HepG2 (cell line): ENCODE measurements at regions of chr15 and their contacts with region 1.

Region 1: DNA sequence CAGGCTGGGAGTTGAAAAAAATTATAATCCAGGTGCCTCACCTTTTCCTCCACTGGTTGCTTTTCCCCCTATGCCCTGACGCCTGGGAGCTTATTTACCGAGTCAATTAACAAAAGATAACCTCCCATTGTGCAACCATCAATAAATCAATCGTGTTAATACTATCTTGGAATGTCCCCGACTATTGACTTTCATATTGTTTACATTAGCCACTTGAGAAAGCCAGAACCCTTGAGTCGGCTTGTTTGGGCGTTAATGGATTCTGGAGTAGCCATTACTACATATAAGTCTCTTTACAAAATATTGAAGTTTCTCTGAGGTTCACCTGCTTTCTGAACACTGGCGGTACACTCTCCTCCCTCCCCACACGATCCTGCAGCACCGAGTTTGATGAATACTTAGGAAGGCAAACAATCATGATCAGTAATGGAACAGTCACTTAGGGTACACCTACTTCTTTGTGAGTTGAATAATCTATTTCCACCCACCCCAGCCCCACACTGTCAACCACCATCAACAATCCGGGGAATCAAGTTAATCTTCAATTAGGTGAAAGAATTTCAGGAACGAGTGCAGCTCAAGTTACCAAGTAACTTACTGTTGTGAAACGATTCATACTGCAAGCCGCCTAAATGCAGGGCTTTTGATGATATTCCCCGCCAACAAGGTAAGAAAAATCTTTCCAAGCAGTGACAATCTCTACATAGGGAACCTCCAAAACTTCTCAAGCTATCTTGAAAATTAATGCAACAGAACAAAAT is 159.3 kb upstream of the NR2F2 start:
- DNase-seq: peak; percentile 88
- ATAC-seq: peak; percentile 95
- H3K4me3 ChIP-seq: peak overlapping the region; percentile 27 to 54 (median 52); a peak in 5 of 6 replicates
- H3K27ac ChIP-seq: peak overlapping the region; percentile 86
- H3K4me1 ChIP-seq: peaks cover 43% of the 10 kb centered on the region
- H3K27me3 ChIP-seq: no peaks in the 10 kb centered on the region
- CTCF ChIP-seq: no peak
- EP300 ChIP-seq: peak in 1 of 2 experiments; percentile 77; a peak in 2 of 4 replicates
- POLR2A ChIP-seq: no peak
- RAD21 ChIP-seq: no peak

Region 2: GRCh38 chr15:96122077-96122681 is 49.0 kb before region 1 on chr15:
- CTCF ChIA-PET with region 1: no interaction called
- POLR2A ChIA-PET with region 1: no interaction called
- in situ Hi-C with region 1: no loop called
- intact Hi-C with region 1: loop called (anchors 5 kb)
- DNase-seq: peak; percentile 7
- ATAC-seq: no peak
- H3K4me3 ChIP-seq: peak overlapping the region in 1 of 3 experiments; percentile 7; a peak in 1 of 6 replicates
- H3K27ac ChIP-seq: peak overlapping the region; percentile 57
- H3K4me1 ChIP-seq: peaks cover 39% of the 10 kb centered on the region
- H3K27me3 ChIP-seq: no peaks in the 10 kb centered on the region
- CTCF ChIP-seq: no peak
- EP300 ChIP-seq: no peak
- POLR2A ChIP-seq: no peak
- RAD21 ChIP-seq: no peak

Region 3: DNA sequence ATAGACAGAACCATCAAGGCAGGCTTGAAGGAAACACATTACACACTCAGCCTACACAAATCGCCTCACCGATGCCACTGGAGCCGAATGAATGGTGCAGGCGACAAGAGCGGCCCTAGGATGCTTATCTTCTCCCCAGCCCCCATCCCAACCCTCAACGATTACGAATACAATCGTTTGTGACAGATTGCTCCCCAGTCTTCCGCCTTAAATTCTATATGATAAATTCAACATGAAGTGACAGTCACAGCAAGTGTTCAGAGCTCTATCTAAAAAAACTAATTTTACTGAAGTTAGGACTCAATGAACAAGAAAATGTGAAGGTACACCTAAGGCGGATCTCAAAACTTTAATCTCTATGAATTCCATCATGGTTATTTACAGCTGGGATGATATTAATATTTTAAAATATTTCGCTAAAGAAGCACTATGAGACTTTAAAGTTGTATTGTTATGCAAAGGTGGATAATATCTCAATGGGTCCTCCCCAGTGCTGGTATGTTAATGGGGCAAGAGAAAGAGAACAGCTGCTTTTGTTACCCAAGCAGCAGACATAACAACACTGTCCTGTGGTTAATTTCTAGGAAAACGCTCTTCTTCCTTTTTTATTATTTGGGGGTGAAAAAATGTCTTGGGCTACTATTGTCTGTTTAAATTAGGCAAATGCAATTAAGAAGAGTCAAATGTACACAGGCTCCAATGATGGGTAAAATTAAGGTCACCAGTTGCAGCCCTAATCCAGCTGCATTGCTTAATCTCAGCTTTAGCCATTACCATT is 11.8 kb after region 1 on chr15:
- CTCF ChIA-PET with region 1: no interaction called
- POLR2A ChIA-PET with region 1: interaction called, 21 read pairs
- in situ Hi-C with region 1: no loop called
- intact Hi-C with region 1: no loop called
- DNase-seq: no peak
- ATAC-seq: no peak
- H3K4me3 ChIP-seq: peak overlapping the region in 1 of 3 experiments; percentile 4; a peak in 1 of 6 replicates
- H3K27ac ChIP-seq: peak overlapping the region; percentile 82
- H3K4me1 ChIP-seq: peaks cover 61% of the 10 kb centered on the region
- H3K27me3 ChIP-seq: no peaks in the 10 kb centered on the region
- CTCF ChIP-seq: no peak
- EP300 ChIP-seq: no peak
- POLR2A ChIP-seq: no peak
- RAD21 ChIP-seq: no peak

Region 4: DNA sequence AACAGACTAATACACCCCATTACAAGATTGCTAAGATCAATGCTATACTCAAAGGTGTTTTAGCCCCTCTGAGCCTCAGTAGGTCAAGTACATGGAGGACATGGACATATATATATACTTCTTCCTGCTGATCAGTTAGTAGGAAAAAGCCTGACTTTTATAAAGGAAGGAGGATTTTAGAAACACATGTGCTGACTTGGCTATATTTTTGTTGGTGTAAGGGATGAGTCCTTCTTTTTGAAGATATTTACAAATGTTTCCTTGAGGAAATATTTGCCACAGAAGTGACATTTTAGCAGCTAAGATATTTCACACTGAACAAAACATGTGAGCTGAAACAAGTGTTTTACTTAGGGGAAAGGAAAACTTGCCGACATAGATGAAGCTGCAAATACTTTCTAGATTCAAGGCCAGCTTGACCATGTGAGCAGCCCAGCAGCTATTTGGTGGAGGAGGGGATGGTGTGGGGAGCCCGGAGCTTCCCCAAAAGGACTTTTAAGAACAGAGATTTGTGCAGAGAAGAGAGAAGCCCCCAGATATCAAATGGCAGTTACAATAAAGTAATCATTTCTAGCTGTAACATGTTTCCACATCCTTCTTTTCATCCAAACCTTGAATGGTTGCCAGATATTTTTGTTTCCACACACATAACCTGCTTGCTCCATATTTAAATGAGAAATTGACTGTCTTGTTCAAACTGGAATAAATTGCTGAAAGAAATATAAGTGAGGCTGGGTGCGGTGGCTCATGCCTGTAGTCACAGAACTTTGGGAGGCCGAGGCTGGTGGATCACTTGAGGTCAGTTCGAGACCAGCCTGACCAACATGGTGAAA is 47.7 kb after region 1 on chr15:
- CTCF ChIA-PET with region 1: no interaction called
- POLR2A ChIA-PET with region 1: no interaction called
- in situ Hi-C with region 1: no loop called
- intact Hi-C with region 1: no loop called
- DNase-seq: no peak
- ATAC-seq: no peak
- H3K4me3 ChIP-seq: no peak overlapping the region
- H3K27ac ChIP-seq: no peak overlapping the region
- H3K4me1 ChIP-seq: peaks cover 13% of the 10 kb centered on the region
- H3K27me3 ChIP-seq: no peaks in the 10 kb centered on the region
- CTCF ChIP-seq: no peak
- EP300 ChIP-seq: no peak
- POLR2A ChIP-seq: no peak
- RAD21 ChIP-seq: no peak

Region 5: DNA sequence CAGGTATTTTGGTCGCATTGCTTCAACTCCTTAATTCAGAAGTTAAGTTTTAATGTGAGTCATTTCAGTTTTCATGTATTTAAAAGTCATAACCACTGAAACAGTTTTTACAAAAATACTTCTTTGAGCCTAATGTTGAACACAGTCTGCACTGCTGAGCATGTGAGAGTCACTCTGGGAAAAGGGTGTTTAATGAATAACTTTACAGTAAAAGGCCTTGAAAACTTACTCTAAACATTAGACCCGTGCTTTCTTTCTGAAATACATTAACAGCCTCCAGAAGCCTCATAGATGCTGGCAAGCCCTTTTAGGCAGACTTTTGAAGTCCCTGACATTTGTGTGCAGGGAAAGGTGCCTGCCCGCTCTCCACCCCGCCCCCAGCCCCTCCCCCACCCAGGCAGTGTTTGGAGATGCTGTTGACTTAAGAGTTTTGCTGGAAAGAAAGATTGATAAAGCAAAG is 90.4 kb after region 1 on chr15:
- CTCF ChIA-PET with region 1: no interaction called
- POLR2A ChIA-PET with region 1: interaction called, 4 read pairs
- in situ Hi-C with region 1: loop called (anchors 5 kb)
- intact Hi-C with region 1: loop called (anchors 1 kb)
- DNase-seq: peak; percentile 94
- ATAC-seq: peak; percentile 86
- H3K4me3 ChIP-seq: peak overlapping the region in 2 of 3 experiments; percentile 50 to 54; a peak in 4 of 6 replicates
- H3K27ac ChIP-seq: peak overlapping the region; percentile 87
- H3K4me1 ChIP-seq: peaks cover 85% of the 10 kb centered on the region
- H3K27me3 ChIP-seq: no peaks in the 10 kb centered on the region
- CTCF ChIP-seq: no peak
- EP300 ChIP-seq: peak in 1 of 2 experiments; percentile 81; a peak in 2 of 4 replicates
- POLR2A ChIP-seq: 0 out of 4 replicates have a peak, but pooled peaks of 1 of the 2 experiments have one; percentile 44
- RAD21 ChIP-seq: no peak